Posterior vena cava (tissue), 2 donors: ENCODE measurements at regions of chr15 and their contacts with region 1.

Region 1: GRCh38 chr15:87239582-87240230 is 1016.8 kb downstream of the NTRK3 start:
- DNase-seq: no peak

Region 2: DNA sequence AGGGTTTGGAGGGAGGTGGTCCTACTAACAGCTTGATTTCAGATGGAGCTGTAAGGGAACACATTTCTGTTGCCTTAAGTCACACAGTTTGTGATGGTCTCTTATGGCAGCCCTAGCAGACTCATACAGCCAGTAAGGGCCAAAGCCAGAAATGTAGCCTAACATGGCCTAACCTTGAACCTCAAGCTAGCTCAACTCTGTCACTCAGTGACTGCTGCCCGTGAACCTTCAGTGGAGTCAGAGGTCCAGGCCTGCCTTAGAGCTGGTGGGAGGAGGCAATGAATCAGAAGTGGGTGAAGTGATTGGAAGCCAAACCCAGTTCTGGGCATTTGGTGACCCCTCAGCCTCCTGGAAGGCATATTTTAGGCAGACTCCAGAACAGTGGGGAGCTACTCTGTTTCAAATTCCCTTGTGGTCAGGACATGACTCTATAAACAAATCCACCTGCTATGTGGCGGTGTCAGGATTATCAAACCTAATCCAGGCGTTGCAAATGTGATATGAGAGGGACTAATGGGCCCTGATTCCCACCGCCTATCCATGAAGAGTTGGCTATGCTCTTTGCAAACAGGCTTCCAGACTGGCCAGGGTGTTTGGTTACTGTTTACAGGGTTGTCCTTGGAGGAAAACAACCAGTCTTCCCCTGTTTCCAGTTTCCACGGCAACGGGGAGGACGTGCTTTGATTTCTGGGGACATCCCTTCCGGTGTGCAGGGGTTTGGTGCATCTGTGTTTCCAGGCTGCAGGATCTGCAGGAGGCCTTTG is 1265.9 kb before region 1 on chr15:
- intact Hi-C with region 1: loop called in 1 of 2 experiments (anchors 5 kb)
- DNase-seq: no peak

Region 3: DNA sequence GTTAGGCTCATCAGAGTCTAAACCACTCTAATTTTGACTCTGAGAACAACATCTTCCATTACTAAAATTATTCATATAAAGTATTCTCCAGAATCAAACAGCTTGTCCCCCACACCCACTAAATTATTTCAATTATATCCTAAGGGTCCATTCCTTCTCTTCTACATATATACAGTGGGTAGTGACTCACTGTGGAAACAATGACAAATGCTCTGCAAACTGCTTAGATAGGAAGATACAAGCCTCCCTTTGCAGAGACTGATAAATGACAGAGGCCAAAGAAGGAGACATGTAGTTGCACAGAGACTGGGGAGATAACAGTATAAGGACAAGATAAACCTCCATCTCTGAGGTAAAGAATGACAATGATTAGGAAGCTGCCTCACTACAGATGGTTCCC is 72.7 kb before region 1 on chr15:
- intact Hi-C with region 1: no loop called
- DNase-seq: no peak